Caco-2 (cell line): ENCODE measurements at regions of chr19 and their contacts with region 1.

Region 1: DNA sequence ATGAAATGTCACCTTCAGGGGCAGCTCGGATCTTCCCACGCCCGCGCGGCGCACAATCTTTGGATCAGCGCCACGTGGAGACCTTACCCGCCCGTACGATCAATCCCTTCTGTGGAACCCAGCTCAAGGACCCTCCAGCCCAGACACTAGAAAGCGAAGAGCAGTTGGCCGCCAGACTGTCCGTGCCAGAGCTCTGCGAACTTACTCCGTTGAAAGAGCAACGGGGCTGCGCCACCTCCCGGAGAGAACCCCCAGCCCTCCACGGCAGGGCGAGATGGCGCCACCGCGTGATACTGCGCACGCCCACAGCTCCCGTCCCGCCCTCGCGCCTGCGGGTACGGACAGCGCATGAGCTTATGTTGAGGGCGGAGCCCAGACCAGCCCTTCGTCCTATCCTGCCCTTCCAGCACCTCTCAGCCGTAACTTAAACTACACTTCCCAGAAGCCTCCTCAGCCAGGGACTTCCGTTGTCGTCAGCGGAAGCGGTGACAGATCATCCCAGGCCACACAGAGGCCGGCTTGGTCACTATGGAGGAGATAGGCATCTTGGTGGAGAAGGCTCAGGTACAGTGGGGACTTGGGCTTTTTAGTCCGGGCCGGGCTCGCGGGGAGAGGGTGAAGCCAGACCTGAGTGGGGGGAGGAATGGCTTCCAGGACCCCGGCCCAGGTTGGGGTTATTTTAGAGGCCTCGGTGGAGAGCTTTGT is at the start of gene PSMC4:
- DNase-seq: peak; percentile 99
- H3K4me3 ChIP-seq: peak within 1 kb of the TSS; percentile 67
- H3K4me3 Mint-ChIP-seq: peak within 1 kb of the TSS; percentile 96
- H3K27ac Mint-ChIP-seq: peak within 1 kb of the TSS; percentile 96
- H3K4me1 ChIP-seq: peaks cover 6% of the 10 kb centered on the region; the same call in 1 of the 2 replicates
- H3K4me1 Mint-ChIP-seq: peaks cover 25% of the 10 kb centered on the region
- H3K27me3 ChIP-seq: no peaks in the 10 kb centered on the region
- H3K27me3 Mint-ChIP-seq: no peaks in the 10 kb centered on the region
- CTCF ChIP-seq: peak; percentile 61 to 97
- total RNA-seq, gene PSMC4: 183 and 196 TPM in 2 replicates

Region 2: GRCh38 chr19:39792999-39793546 is 177.8 kb before region 1 on chr19:
- CTCF ChIA-PET with region 1: interaction called, 24 read pairs
- POLR2A ChIA-PET with region 1: no interaction called
- intact Hi-C with region 1: loop called (anchors 1 kb)
- DNase-seq: peak; percentile 57 to 77
- H3K4me3 ChIP-seq: peak overlapping the region; percentile 23
- H3K4me3 Mint-ChIP-seq: peak overlapping the region; percentile 35
- H3K27ac Mint-ChIP-seq: no peak overlapping the region
- H3K4me1 ChIP-seq: no peaks in the 10 kb centered on the region
- H3K4me1 Mint-ChIP-seq: no peaks in the 10 kb centered on the region
- H3K27me3 ChIP-seq: no peaks in the 10 kb centered on the region
- H3K27me3 Mint-ChIP-seq: peaks cover 23% of the 10 kb centered on the region
- CTCF ChIP-seq: peak; percentile 85 to 90

Region 3: GRCh38 chr19:39846176-39846677 is 124.6 kb before region 1 on chr19 and contains the start of gene FBL:
- CTCF ChIA-PET with region 1: interaction called, 14 read pairs
- POLR2A ChIA-PET with region 1: interaction called, 21 read pairs
- intact Hi-C with region 1: no loop called
- DNase-seq: peak; percentile 96 to 98
- H3K4me3 ChIP-seq: peak within 1 kb of the TSS; percentile 79
- H3K4me3 Mint-ChIP-seq: peak within 1 kb of the TSS; percentile 88
- H3K27ac Mint-ChIP-seq: peak within 1 kb of the TSS; percentile 81
- H3K4me1 ChIP-seq: peaks cover 25% of the 10 kb centered on the region
- H3K4me1 Mint-ChIP-seq: peaks cover 48% of the 10 kb centered on the region
- H3K27me3 ChIP-seq: no peaks in the 10 kb centered on the region
- H3K27me3 Mint-ChIP-seq: no peaks in the 10 kb centered on the region
- CTCF ChIP-seq: no peak
- total RNA-seq, gene FBL: 374 and 411 TPM in 2 replicates

Region 4: GRCh38 chr19:39889872-39890545 is 80.8 kb before region 1 on chr19:
- CTCF ChIA-PET with region 1: interaction called, 4 read pairs
- POLR2A ChIA-PET with region 1: no interaction called
- intact Hi-C with region 1: loop called (anchors 5 kb)
- DNase-seq: peak in 1 of 2 experiments; percentile 29
- H3K4me3 ChIP-seq: no peak overlapping the region
- H3K4me3 Mint-ChIP-seq: no peak overlapping the region
- H3K27ac Mint-ChIP-seq: no peak overlapping the region
- H3K4me1 ChIP-seq: no peaks in the 10 kb centered on the region
- H3K4me1 Mint-ChIP-seq: no peaks in the 10 kb centered on the region
- H3K27me3 ChIP-seq: no peaks in the 10 kb centered on the region
- H3K27me3 Mint-ChIP-seq: peaks cover 8% of the 10 kb centered on the region
- CTCF ChIP-seq: no peak

Region 5: DNA sequence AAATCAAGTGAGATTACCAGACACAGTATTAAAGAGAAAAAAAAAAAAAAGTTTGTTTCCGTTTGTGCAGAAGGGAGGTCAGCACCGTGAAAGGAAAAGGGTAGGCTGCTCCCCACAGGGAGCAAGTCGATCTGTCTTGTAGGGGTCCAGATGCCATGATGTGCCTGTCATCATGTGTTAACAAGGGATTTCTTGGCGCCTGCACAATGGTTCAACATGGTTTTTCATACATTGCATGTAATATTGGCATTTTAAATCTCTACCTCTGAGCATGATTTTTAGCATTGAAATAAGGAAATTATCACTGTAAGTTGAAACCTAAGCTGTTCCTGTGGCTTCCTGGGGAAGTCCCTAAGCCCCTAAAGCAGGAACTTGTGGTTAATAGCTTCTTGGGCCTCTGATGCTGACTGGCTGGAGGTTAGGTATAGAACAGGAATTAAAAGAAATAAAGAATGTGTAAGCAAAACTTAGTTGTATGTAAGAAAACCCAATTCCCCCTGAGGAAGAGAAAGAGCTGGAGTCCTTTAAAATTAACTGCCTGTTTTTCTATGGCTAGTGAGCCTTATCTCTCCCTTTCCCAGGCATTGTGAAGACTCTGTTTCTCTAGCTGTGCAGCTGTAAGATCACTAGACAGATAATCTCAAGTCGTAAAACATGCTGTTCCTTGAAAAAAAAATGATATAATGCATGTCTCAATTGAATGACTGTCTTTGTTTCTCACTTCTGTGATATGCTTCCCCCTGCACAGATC is 29.0 kb before region 1 on chr19:
- CTCF ChIA-PET with region 1: interaction called, 13 read pairs
- POLR2A ChIA-PET with region 1: interaction called, 4 read pairs
- intact Hi-C with region 1: loop called (anchors 1 kb)
- DNase-seq: no peak
- H3K4me3 ChIP-seq: no peak overlapping the region
- H3K4me3 Mint-ChIP-seq: no peak overlapping the region
- H3K27ac Mint-ChIP-seq: no peak overlapping the region
- H3K4me1 ChIP-seq: peaks cover 27% of the 10 kb centered on the region
- H3K4me1 Mint-ChIP-seq: peaks cover 29% of the 10 kb centered on the region
- H3K27me3 ChIP-seq: no peaks in the 10 kb centered on the region
- H3K27me3 Mint-ChIP-seq: no peaks in the 10 kb centered on the region
- CTCF ChIP-seq: no peak

Region 6: DNA sequence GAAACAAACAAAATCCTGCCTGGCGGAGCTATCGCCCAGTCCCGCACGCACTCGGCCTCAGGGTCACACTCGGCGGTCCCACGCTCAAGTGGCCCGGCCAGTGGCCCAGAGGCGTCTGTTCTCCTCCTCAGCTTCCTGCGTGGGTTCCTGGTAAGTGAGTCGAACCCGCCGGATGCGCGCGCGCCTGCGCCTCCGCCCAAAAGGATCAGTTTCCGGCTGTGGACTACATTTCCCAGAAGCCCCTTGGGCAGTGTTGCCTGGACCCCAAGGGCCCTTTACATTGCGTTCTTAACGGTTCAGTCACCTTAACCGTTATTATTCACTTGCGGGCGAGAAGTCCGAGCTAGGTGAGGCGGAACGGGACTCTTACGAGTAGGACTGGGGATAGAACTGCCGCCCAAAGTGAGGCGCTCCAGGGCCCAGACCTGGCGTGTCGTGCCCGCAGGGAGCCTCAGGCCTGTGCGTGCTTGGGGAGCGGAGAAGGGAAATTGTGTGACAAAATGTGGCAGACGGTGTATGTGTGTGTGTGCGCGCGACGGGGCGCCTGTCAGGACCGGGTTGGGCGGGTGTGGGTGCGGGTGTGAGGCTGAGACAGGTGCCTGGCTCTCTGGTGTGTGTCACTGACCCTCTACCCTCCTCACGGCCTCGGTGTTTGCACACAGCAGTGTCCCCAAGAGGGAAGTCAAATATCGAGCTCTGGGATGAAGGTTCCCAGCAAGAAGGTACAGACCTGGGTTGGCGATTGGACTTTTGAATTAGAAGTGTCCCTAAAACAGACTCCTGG is 26.2 kb after region 1 on chr19 and contains the start of gene ZNF546:
- CTCF ChIA-PET with region 1: interaction called, 10 read pairs
- POLR2A ChIA-PET with region 1: interaction called, 7 read pairs
- intact Hi-C with region 1: loop called (anchors 2 kb)
- DNase-seq: peak; percentile 85 to 86
- H3K4me3 ChIP-seq: peak within 1 kb of the TSS; percentile 81
- H3K4me3 Mint-ChIP-seq: peak within 1 kb of the TSS; percentile 85
- H3K27ac Mint-ChIP-seq: peak within 1 kb of the TSS; percentile 85
- H3K4me1 ChIP-seq: no peaks in the 10 kb centered on the region; the same call in 1 of the 2 replicates
- H3K4me1 Mint-ChIP-seq: no peaks in the 10 kb centered on the region
- H3K27me3 ChIP-seq: no peaks in the 10 kb centered on the region
- H3K27me3 Mint-ChIP-seq: no peaks in the 10 kb centered on the region
- CTCF ChIP-seq: peak in 1 of 2 experiments; percentile 4
- total RNA-seq, gene ZNF546: 0.98 and 1.0 TPM in 2 replicates

Region 7: DNA sequence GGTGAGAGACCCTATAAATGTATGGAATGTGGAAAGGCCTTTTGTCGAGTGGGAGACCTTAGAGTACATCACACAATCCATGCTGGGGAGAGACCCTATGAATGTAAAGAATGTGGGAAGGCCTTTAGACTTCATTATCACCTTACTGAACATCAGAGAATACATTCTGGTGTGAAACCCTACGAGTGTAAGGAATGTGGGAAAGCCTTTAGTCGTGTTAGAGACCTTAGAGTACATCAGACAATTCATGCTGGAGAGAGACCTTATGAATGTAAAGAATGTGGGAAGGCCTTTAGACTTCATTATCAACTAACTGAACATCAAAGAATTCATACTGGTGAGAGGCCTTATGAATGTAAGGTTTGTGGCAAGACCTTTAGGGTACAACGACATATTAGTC is 43.2 kb after region 1 on chr19:
- CTCF ChIA-PET with region 1: no interaction called
- POLR2A ChIA-PET with region 1: no interaction called
- intact Hi-C with region 1: no loop called
- DNase-seq: no peak
- H3K4me3 ChIP-seq: no peak overlapping the region
- H3K4me3 Mint-ChIP-seq: no peak overlapping the region
- H3K27ac Mint-ChIP-seq: no peak overlapping the region
- H3K4me1 ChIP-seq: no peaks in the 10 kb centered on the region
- H3K4me1 Mint-ChIP-seq: no peaks in the 10 kb centered on the region
- H3K27me3 ChIP-seq: no peaks in the 10 kb centered on the region
- H3K27me3 Mint-ChIP-seq: no peaks in the 10 kb centered on the region
- CTCF ChIP-seq: no peak

Region 8: DNA sequence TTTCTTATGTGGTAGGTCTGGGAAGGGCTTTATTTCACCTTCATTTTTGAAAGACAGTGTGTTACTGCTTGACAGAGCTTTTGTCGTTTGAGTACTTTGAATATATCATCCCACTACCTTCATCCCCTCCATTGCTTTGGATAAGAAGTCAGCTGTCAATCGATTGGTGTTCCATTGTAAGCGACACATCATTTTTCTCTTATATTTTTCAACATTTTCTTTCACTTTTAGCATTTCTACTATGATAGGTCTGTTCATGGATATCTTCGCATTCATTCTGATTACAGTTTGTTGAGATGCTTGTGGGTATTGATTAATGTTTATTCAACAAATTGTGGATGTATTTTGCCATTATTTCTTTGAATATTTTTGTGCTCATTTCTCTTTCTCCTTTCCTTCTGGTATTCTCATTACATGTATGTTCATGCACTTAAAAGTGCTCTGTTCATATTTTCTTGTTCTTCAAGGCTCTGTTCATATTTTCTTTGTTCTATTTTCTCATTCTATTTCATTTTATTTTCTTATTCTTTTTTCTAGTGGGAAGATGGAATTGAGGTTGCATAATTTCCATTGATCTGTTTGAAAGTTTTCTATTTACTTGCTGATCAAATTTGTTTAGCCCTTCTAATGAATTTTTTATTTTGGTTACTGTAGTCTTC is 55.2 kb after region 1 on chr19:
- CTCF ChIA-PET with region 1: no interaction called
- POLR2A ChIA-PET with region 1: no interaction called
- intact Hi-C with region 1: no loop called
- DNase-seq: no peak
- H3K4me3 ChIP-seq: no peak overlapping the region
- H3K4me3 Mint-ChIP-seq: no peak overlapping the region
- H3K27ac Mint-ChIP-seq: no peak overlapping the region
- H3K4me1 ChIP-seq: no peaks in the 10 kb centered on the region
- H3K4me1 Mint-ChIP-seq: no peaks in the 10 kb centered on the region
- H3K27me3 ChIP-seq: no peaks in the 10 kb centered on the region
- H3K27me3 Mint-ChIP-seq: no peaks in the 10 kb centered on the region
- CTCF ChIP-seq: no peak

Region 9: GRCh38 chr19:40221858-40222837 is 251.3 kb after region 1 on chr19:
- CTCF ChIA-PET with region 1: interaction called, 3 read pairs
- POLR2A ChIA-PET with region 1: no interaction called
- intact Hi-C with region 1: loop called (anchors 1 kb)
- DNase-seq: peak; percentile 83 to 88
- H3K4me3 ChIP-seq: no peak overlapping the region
- H3K4me3 Mint-ChIP-seq: peak overlapping the region; percentile 9
- H3K27ac Mint-ChIP-seq: no peak overlapping the region
- H3K4me1 ChIP-seq: peaks cover 14% of the 10 kb centered on the region; the same call in 1 of the 2 replicates
- H3K4me1 Mint-ChIP-seq: peaks cover 17% of the 10 kb centered on the region
- H3K27me3 ChIP-seq: no peaks in the 10 kb centered on the region
- H3K27me3 Mint-ChIP-seq: peaks cover 10% of the 10 kb centered on the region
- CTCF ChIP-seq: peak; percentile 78 to 91